ENCODE measurements at regions of chr12 and their contacts with region 1.

Region 1: DNA sequence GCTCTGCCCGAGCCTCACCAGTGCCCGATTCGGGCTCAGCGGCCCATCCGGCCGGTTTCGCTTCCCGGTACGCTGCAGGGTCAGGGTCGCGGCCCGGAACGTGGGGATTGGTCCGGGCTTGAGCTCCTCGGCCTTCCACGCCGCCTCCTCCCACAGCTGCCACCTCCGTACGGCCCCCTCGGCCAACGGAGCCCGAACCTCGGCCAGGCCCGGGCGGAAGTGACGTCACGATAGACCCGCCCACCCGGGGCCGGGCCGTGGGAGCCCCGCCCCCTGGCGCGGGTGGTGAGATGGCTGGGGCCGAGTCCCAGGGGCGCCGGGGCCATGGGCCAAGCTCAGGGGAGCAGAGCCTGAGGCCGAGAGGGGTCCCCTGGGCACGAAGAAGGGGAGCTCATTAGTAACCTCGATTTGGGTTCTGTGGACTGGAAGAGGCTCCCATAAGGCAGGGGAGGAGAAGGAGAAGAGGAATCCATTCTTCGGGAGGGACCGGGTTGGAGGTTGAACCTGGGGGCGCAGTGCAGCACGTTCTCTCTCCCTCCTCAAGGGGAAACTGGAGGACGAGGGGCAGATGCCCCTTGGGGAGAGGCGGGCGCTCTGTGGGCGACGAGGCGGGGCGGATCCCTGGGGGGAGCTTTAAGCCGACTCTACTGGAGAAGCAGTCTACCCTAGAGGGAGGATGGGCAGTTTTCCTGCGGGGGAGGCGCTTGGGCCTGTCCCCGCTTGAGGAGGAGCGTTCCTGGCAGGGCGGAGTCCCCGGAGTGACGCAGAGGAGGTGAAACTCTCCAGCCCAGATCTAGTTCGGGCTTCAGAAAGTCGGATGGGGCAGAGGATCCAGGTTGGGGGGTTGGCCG is at the start of gene MLF2:
- DNase-seq: peak; percentile 99
- ATAC-seq: peak; percentile 95 to 96
- total RNA-seq, gene MLF2: 118 to 149 TPM

Region 2: DNA sequence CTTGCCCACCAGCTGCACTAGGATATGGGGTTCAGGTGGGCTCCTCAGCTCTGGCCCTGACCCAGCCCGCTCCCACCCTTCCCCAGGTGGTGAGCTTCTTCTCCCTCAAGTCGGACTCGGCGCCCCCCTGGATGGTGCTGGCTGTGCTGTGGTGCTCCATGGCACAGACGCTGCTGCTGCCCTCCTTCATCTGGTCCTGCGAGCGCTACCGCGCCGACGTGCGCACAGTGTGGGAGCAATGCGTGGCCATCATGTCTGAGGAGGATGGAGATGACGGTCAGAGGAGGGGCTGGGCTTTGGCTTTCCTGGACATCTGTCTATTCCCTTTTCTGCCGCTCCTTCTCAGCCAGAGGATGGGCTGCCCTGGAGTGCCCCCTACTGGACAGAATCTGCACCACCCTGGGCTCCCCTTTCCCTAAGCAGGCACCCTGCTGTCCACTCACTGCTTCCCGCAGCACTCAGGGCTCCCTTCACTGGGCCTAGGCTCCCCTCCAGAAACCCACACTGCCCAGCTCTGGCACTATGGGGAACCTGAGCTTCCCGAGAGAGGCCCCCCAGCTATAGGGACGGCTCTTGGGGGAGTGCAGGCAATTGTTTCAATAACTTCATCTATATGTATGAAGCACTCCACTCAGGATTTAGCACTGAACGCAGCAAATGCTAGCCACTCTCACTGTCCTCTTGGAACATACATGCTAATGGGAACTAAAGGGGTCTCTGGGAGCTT is 72.4 kb after region 1 on chr12:
- intact Hi-C with region 1: loop called (anchors 5 to 10 kb)
- DNase-seq: peak; percentile 85
- ATAC-seq: peak; percentile 53 to 58